ENCODE measurements at regions of chr11 and their contacts with region 1.

Region 1: GRCh38 chr11:117704395-117705100 is 92.5 kb downstream of the DSCAML1 start:
- DNase-seq: no peak
- H3K4me3 Mint-ChIP-seq: no peak overlapping the region
- H3K27ac Mint-ChIP-seq: no peak overlapping the region
- H3K4me1 Mint-ChIP-seq: peaks cover 9% of the 10 kb centered on the region
- H3K27me3 Mint-ChIP-seq: peaks cover 12% of the 10 kb centered on the region

Region 2: DNA sequence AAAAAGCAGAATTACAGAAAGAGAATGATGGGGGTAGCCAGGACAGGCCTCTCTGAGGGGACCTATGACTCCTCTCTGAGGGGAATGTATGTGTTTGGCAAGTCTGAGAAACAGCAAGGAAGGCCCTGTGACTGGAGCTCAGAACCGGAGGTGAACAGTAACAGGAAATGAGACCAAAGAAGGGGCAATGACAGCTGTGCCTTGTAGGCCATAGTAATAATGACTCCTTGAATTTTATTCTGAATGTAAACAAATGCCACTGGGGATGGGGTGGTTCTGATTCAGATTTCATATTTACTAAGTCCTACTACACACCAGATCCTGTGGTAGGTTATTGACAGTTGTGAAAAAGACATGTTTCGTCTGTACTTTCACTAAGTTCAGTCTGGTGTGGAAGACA is 814.4 kb before region 1 on chr11:
- intact Hi-C with region 1: loop called (anchors 5 kb)
- DNase-seq: no peak
- H3K4me3 Mint-ChIP-seq: no peak overlapping the region
- H3K27ac Mint-ChIP-seq: peak overlapping the region; percentile 64
- H3K4me1 Mint-ChIP-seq: peaks cover 26% of the 10 kb centered on the region
- H3K27me3 Mint-ChIP-seq: no peaks in the 10 kb centered on the region

Region 3: DNA sequence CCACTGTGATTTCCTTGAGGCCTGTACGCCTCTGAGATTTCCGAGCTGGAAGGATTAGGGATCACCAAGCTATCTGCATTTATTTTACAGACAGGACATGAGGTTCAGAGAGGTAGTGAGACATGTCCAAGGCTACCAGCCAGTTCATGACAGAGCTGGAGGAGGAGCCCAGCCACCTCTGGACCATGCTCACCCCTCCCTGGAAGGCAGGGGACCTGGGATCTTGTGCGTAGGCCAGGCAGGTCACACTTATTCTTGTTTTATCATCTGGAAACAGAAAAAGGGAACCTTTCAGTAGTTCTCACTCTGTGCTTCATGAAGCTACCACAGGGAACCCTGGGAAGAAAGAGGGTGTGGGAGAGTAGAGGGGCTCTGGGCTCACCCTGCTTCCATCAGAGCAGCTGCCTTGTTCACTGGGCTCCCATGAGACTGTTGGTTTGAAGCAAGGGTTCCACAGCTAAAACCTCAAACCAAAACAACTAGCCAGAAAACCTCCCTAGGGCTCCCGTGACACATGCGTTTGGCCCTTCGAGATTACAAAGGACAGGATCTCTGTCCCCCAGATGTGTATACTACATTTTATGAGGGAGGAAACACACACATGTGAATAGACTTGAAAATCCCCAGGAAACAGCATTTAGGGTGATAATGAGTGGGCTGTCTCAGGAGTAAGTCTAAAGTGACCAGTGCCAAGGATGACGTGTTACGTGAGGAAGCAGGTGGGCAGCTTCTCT is 13.9 kb before region 1 on chr11:
- intact Hi-C with region 1: no loop called
- DNase-seq: no peak
- H3K4me3 Mint-ChIP-seq: no peak overlapping the region
- H3K27ac Mint-ChIP-seq: no peak overlapping the region
- H3K4me1 Mint-ChIP-seq: no peaks in the 10 kb centered on the region
- H3K27me3 Mint-ChIP-seq: peaks cover 7% of the 10 kb centered on the region

Measured in activated T-helper 1 cell treated with anti-CD3 and anti-CD28 coated beads, Interleukin-12 subunit alpha, Interleukin-12 subunit beta, Interleukin-2, Interleukin-4 antibody, amounts not matched to agents 30 ng/mL and 10 ng/mL and 1 ng/mL, durations not matched to agents 14 hours and 24 hours and 36 hours (primary cell).